ENCODE measurements at regions of chr6 and their contacts with region 1.

Region 1: GRCh38 chr6:139364302-139364981 is 10.0 kb downstream of the CITED2 start:
- DNase-seq: no peak
- ATAC-seq: peak; percentile 48 to 76
- H3K4me3 ChIP-seq: no peak overlapping the region
- H3K27ac ChIP-seq: peak overlapping the region in 2 of 4 donors; percentile 30 to 41
- H3K4me1 ChIP-seq: peaks cover 4 to 9% of the 10 kb centered on the region in 2 donors
- H3K27me3 ChIP-seq: no peaks in the 10 kb centered on the region
- CTCF ChIP-seq: peak; percentile 74 to 89 (median 85)
- POLR2A ChIP-seq: no peak

Region 2: GRCh38 chr6:138817822-138818308 is 546.6 kb before region 1 on chr6:
- in situ Hi-C with region 1: loop called (anchors 10 to 25 kb)
- intact Hi-C with region 1: no loop called
- DNase-seq: no peak
- ATAC-seq: no peak
- H3K4me3 ChIP-seq: no peak overlapping the region
- H3K27ac ChIP-seq: no peak overlapping the region
- H3K4me1 ChIP-seq: no peaks in the 10 kb centered on the region
- H3K27me3 ChIP-seq: no peaks in the 10 kb centered on the region
- CTCF ChIP-seq: no peak
- POLR2A ChIP-seq: no peak

Region 3: GRCh38 chr6:138830248-138830647 is 534.2 kb before region 1 on chr6:
- in situ Hi-C with region 1: no loop called
- intact Hi-C with region 1: no loop called
- DNase-seq: no peak
- ATAC-seq: no peak
- H3K4me3 ChIP-seq: no peak overlapping the region
- H3K27ac ChIP-seq: no peak overlapping the region
- H3K4me1 ChIP-seq: no peaks in the 10 kb centered on the region
- H3K27me3 ChIP-seq: no peaks in the 10 kb centered on the region
- CTCF ChIP-seq: no peak
- POLR2A ChIP-seq: no peak

Region 4: GRCh38 chr6:138987640-138988468 is 376.6 kb before region 1 on chr6 and contains the start of gene REPS1:
- in situ Hi-C with region 1: no loop called
- intact Hi-C with region 1: loop called (anchors 10 kb)
- DNase-seq: peak; percentile 80 to 87
- ATAC-seq: peak; percentile 93 to 94
- H3K4me3 ChIP-seq: peak within 1 kb of the TSS; percentile 85 to 96 (median 94)
- H3K27ac ChIP-seq: peak within 1 kb of the TSS; percentile 86 to 90 (median 88)
- H3K4me1 ChIP-seq: peaks cover 24 to 35% of the 10 kb centered on the region in 2 donors
- H3K27me3 ChIP-seq: no peaks in the 10 kb centered on the region
- CTCF ChIP-seq: peak; percentile 86 to 99 (median 98)
- POLR2A ChIP-seq: peak; percentile 60 to 70
- total RNA-seq, gene REPS1: 14.8 to 21.6 (median 17.4) TPM

Region 5: GRCh38 chr6:139219271-139219729 is 145.1 kb before region 1 on chr6:
- in situ Hi-C with region 1: loop called in 1 of 4 experiments (anchors 5 kb)
- intact Hi-C with region 1: loop called (anchors 1 kb)
- DNase-seq: peak; percentile 78 to 85
- ATAC-seq: peak; percentile 98 to 99
- H3K4me3 ChIP-seq: peak overlapping the region in 1 of 4 donors; percentile 3
- H3K27ac ChIP-seq: peak overlapping the region; percentile 41 to 76 (median 70)
- H3K4me1 ChIP-seq: peaks cover 0 to 4% of the 10 kb centered on the region in 2 donors
- H3K27me3 ChIP-seq: no peaks in the 10 kb centered on the region
- CTCF ChIP-seq: peak; percentile 73 to 90 (median 82)
- POLR2A ChIP-seq: peak in 1 of 2 donors; percentile 52

Region 6: DNA sequence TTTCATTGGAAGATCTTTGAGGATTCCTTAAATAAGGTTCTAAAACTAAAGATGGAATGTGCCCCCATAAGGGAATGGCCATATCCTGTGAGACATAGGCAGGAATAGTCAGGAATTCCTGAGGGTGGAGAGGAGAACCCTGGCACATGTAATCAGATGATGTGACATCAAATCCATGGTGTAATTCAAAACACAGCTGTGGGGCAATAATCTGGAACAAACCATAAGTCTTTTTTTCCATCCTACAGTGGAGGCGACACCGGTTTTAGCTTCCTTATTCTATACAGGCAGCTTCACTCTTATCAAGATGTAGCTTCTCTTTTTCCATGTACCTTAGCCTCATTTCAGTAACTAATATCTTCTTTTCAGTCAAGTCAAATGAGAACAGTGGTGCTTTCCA is 143.6 kb after region 1 on chr6:
- in situ Hi-C with region 1: no loop called
- intact Hi-C with region 1: no loop called
- DNase-seq: peak in 1 of 2 donors; percentile 6
- ATAC-seq: peak; percentile 87 to 89
- H3K4me3 ChIP-seq: no peak overlapping the region
- H3K27ac ChIP-seq: no peak overlapping the region
- H3K4me1 ChIP-seq: peaks cover 3 to 11% of the 10 kb centered on the region in 2 donors
- H3K27me3 ChIP-seq: no peaks in the 10 kb centered on the region
- CTCF ChIP-seq: no peak
- POLR2A ChIP-seq: no peak

Region 7: GRCh38 chr6:139996253-139996834 is 631.9 kb after region 1 on chr6:
- in situ Hi-C with region 1: loop called in 1 of 4 experiments (anchors 10 kb)
- intact Hi-C with region 1: no loop called
- DNase-seq: no peak
- ATAC-seq: peak; percentile 56 to 75
- H3K4me3 ChIP-seq: no peak overlapping the region
- H3K27ac ChIP-seq: no peak overlapping the region
- H3K4me1 ChIP-seq: peaks cover 0 to 5% of the 10 kb centered on the region in 2 donors
- H3K27me3 ChIP-seq: no peaks in the 10 kb centered on the region
- CTCF ChIP-seq: peak in 1 of 5 experiments; percentile 35
- POLR2A ChIP-seq: no peak

Measured in gastrocnemius medialis (tissue), 4 donors.